ENCODE measurements at regions of chr7 and their contacts with region 1.

Region 1: GRCh38 chr7:146067880-146068279 is 48.7 kb upstream of the CNTNAP2 start:
- DNase-seq: no peak
- H3K4me3 ChIP-seq: no peak overlapping the region
- H3K27ac ChIP-seq: no peak overlapping the region
- H3K27me3 ChIP-seq: peaks cover 0 to 3% (median 0%) of the 10 kb centered on the region in 45 donors
- CTCF ChIP-seq: no peak

Region 2: DNA sequence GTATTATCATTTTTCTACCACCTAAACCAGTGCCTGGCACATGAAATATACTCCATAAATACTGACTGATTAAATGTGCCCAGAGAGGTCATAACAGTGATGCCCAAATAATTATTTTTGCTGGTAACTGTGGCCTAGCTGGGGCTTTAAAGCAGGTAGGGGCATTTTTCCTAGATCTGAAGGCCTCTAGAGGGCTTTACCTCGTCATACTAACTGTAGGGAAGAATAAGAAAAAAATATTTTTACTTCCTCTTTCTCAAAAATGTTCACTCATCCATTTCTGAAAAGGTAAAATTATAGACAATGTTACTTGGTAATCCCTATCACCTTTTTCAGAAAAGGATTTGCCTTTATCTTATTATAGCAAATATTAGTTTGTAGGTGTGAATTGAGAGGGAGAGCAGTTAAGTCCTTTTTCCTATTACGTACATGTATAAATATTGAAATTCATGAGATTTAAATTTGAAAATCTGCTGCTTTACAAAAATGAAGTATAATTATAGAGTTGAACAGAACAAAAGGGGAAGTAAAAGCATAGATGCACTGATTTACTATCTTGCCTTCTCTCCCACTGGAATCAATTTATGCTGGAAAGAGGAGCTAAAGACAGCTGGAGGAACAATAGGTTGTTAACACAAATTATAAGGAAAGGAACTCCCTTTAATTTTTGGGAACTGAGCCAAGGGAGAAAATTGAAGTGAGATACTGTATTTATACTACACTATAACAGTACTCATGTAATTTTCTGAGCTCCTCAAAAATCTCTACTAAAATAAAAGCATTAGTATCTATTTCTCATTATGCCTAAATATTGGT is 1592.9 kb before region 1 on chr7:
- intact Hi-C with region 1: loop called in 1 of 2 experiments (anchors 5 kb)
- DNase-seq: no peak
- H3K4me3 ChIP-seq: no peak overlapping the region
- H3K27ac ChIP-seq: no peak overlapping the region
- H3K27me3 ChIP-seq: no peaks in the 10 kb centered on the region
- CTCF ChIP-seq: no peak

Measured in dorsolateral prefrontal cortex (tissue), 120 donors.